H1 (cell line): ENCODE measurements at regions of chr10 and their contacts with region 1.

Region 1: GRCh38 chr10:70221030-70221429 is 12.2 kb downstream of the PPA1 start:
- DNase-seq: no peak
- H3K4me3 ChIP-seq: no peak overlapping the region
- H3K27ac ChIP-seq: no peak overlapping the region
- H3K4me1 ChIP-seq: no peaks in the 10 kb centered on the region
- H3K27me3 ChIP-seq: no peaks in the 10 kb centered on the region
- CTCF ChIP-seq: no peak
- EP300 ChIP-seq: no peak
- POLR2A ChIP-seq: no peak
- RAD21 ChIP-seq: no peak

Region 2: GRCh38 chr10:70106958-70107791 is 113.9 kb before region 1 on chr10:
- CTCF ChIA-PET with region 1: no interaction called
- POLR2A ChIA-PET with region 1: no interaction called
- DNase-seq: peak; percentile 29 to 92
- H3K4me3 ChIP-seq: no peak overlapping the region
- H3K27ac ChIP-seq: no peak overlapping the region
- H3K4me1 ChIP-seq: peaks cover 0 to 2% (median 2%) of the 10 kb centered on the region in 4 experiments; a peak in 2 of 7 replicates
- H3K27me3 ChIP-seq: no peaks in the 10 kb centered on the region
- CTCF ChIP-seq: peak; percentile 87 to 99 (median 97)
- EP300 ChIP-seq: no peak
- POLR2A ChIP-seq: no peak
- RAD21 ChIP-seq: peak; percentile 61 to 71

Region 3: GRCh38 chr10:70233109-70233938 is 12.3 kb after region 1 on chr10 and contains the start of gene PPA1:
- CTCF ChIA-PET with region 1: interaction called, 23 read pairs
- POLR2A ChIA-PET with region 1: interaction called, 12 read pairs
- DNase-seq: peak; percentile 93 to 100
- H3K4me3 ChIP-seq: peak within 1 kb of the TSS; percentile 67 to 75 (median 68)
- H3K27ac ChIP-seq: peak within 1 kb of the TSS; percentile 38; the same call in 1 of the 2 replicates
- H3K4me1 ChIP-seq: peaks cover 0 to 7% (median 2%) of the 10 kb centered on the region in 4 experiments; a peak in 4 of 7 replicates
- H3K27me3 ChIP-seq: peaks cover 0 to 4% (median 0%) of the 10 kb centered on the region in 4 experiments; a peak in 2 of 7 replicates
- CTCF ChIP-seq: peak in 1 of 3 experiments; percentile 29; a peak in 1 of 4 replicates
- EP300 ChIP-seq: no peak
- POLR2A ChIP-seq: peak; percentile 58 to 80
- RAD21 ChIP-seq: no peak
- total RNA-seq, gene PPA1: 181 and 191 TPM in 2 replicates

Region 4: DNA sequence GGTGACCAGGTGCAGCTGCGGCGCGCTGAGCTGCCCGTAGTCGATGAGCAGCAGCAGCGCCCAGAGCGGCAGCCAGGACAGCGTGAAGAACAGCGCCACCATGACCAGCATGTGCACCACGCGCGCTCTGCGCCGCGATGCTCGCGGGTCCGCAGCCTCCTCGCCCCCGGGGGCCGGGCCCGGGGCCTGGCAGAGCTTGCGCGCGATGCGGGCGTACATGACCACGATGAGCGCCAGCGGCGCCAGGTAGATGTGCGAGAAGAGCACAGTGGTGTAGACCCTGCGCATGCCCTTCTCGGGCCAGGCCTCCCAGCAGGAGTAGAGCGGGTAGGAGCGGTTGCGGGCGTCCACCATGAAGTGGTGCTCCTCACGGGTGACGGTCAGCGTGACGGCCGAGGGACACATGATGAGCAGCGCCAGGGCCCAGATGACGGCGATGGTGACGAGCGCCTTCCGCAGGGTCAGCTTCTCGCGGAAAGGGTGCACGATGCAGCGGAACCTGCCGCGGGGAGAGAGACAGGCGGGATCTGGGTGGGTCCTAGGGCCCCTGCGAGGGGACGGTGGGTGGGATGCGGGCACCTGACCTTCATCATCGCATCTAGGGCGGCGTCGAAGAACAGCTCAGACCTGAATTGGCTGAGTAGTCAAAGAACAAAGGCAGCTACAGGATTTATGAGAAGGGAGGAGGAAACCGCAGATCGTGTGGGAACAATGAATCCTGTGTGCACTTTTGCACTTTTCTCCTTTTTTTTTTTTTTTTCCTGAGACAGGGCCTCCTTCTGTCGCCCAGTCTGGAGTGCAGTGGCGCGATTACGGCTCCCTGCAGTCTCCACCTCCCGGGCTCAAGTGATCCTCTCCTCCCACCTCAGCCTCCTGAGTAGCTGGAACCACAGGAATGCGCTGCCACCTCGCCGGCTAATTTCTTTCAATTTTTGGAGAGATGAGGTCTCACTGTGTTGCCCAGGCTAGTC is 34.6 kb after region 1 on chr10:
- CTCF ChIA-PET with region 1: interaction called, 16 read pairs
- POLR2A ChIA-PET with region 1: no interaction called
- DNase-seq: no peak
- H3K4me3 ChIP-seq: no peak overlapping the region
- H3K27ac ChIP-seq: no peak overlapping the region
- H3K4me1 ChIP-seq: peaks cover 0 to 2% (median 0%) of the 10 kb centered on the region in 4 experiments; a peak in 1 of 7 replicates
- H3K27me3 ChIP-seq: no peaks in the 10 kb centered on the region
- CTCF ChIP-seq: no peak
- EP300 ChIP-seq: no peak
- POLR2A ChIP-seq: no peak
- RAD21 ChIP-seq: no peak

Region 5: DNA sequence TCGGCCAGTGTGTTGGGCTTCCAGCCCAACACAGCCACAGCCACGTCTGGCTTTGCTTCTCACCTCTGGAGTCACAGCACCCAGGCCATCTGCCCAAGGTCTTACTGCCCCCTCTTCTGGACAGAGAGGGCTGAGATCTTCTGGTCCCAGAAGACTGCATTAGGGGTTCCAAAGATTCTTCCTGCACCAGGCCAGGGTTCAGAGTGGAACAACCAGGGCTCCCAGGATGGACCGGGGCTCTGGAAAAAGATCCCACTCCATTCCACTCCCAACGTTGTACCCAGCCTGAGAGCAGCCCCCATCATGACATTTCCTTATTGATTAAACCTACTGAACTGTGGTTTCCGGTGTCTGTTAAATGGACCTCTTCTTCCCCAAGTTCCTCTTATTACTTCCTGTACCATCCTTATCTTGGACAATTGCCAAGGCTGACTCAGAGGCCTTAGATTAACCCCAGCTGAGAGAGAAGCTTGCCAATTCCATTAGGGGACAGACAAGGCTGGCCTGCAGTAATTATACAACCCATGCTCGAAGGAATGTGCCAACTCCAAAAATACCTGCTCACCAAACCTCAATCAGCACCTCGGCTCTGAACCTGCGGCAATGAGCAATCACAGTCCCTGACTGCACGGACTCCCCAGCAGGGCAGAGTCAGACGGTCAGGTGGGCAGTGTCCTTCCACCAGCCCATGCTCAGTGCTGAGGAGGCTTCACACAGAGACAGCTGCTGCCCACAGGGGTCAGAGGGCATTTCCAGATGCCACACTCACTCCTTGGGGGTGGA is 110.6 kb after region 1 on chr10:
- CTCF ChIA-PET with region 1: interaction called, 11 read pairs
- POLR2A ChIA-PET with region 1: interaction called, 3 read pairs
- DNase-seq: no peak
- H3K4me3 ChIP-seq: no peak overlapping the region
- H3K27ac ChIP-seq: no peak overlapping the region
- H3K4me1 ChIP-seq: peaks cover 0 to 2% (median under 1%) of the 10 kb centered on the region in 4 experiments; a peak in 3 of 7 replicates
- H3K27me3 ChIP-seq: no peaks in the 10 kb centered on the region
- CTCF ChIP-seq: peak; percentile 31 to 50 (median 37)
- EP300 ChIP-seq: no peak
- POLR2A ChIP-seq: no peak
- RAD21 ChIP-seq: peak; percentile 57 to 76